Panc1 (cell line): ENCODE measurements at regions of chr3 and their contacts with region 1.

Region 1: GRCh38 chr3:170414202-170414663 is 4.4 kb upstream of the CLDN11 start:
- DNase-seq: peak; percentile 68
- ATAC-seq: peak; percentile 61
- H3K4me3 ChIP-seq: no peak overlapping the region
- H3K27ac ChIP-seq: no peak overlapping the region
- H3K4me1 ChIP-seq: no peaks in the 10 kb centered on the region
- H3K27me3 ChIP-seq: no peaks in the 10 kb centered on the region
- CTCF ChIP-seq: peak; percentile 99

Region 2: GRCh38 chr3:170307671-170308403 is 106.4 kb before region 1 on chr3:
- CTCF ChIA-PET with region 1: interaction called, 5 read pairs
- POLR2A ChIA-PET with region 1: no interaction called
- in situ Hi-C with region 1: no loop called
- intact Hi-C with region 1: loop called (anchors 2 kb)
- DNase-seq: no peak
- ATAC-seq: no peak
- H3K4me3 ChIP-seq: no peak overlapping the region
- H3K27ac ChIP-seq: no peak overlapping the region; the same call in 1 of the 2 replicates
- H3K4me1 ChIP-seq: no peaks in the 10 kb centered on the region
- H3K27me3 ChIP-seq: no peaks in the 10 kb centered on the region
- CTCF ChIP-seq: no peak

Region 3: GRCh38 chr3:170372190-170372879 is 41.9 kb before region 1 on chr3:
- CTCF ChIA-PET with region 1: interaction called, 15 read pairs
- POLR2A ChIA-PET with region 1: no interaction called
- in situ Hi-C with region 1: no loop called
- intact Hi-C with region 1: no loop called
- DNase-seq: no peak
- ATAC-seq: no peak
- H3K4me3 ChIP-seq: no peak overlapping the region
- H3K27ac ChIP-seq: no peak overlapping the region
- H3K4me1 ChIP-seq: no peaks in the 10 kb centered on the region
- H3K27me3 ChIP-seq: no peaks in the 10 kb centered on the region
- CTCF ChIP-seq: no peak

Region 4: GRCh38 chr3:170689893-170690660 is 275.8 kb after region 1 on chr3:
- CTCF ChIA-PET with region 1: interaction called, 13 read pairs
- POLR2A ChIA-PET with region 1: no interaction called
- in situ Hi-C with region 1: no loop called
- intact Hi-C with region 1: loop called (anchors 5 kb)
- DNase-seq: no peak
- ATAC-seq: peak; percentile 78; the same call in 1 of the 2 replicates
- H3K4me3 ChIP-seq: no peak overlapping the region
- H3K27ac ChIP-seq: peak overlapping the region; percentile 61; the same call in 1 of the 2 replicates
- H3K4me1 ChIP-seq: peaks cover 10% of the 10 kb centered on the region
- H3K27me3 ChIP-seq: no peaks in the 10 kb centered on the region
- CTCF ChIP-seq: peak; percentile 88

Region 5: GRCh38 chr3:170848292-170848917 is 434.2 kb after region 1 on chr3:
- CTCF ChIA-PET with region 1: interaction called, 17 read pairs
- POLR2A ChIA-PET with region 1: no interaction called
- in situ Hi-C with region 1: loop called (anchors 10 kb)
- intact Hi-C with region 1: loop called (anchors 1 kb)
- DNase-seq: no peak
- ATAC-seq: 0 out of 2 replicates have a peak, but pooled peaks have one; percentile 63
- H3K4me3 ChIP-seq: no peak overlapping the region
- H3K27ac ChIP-seq: no peak overlapping the region
- H3K4me1 ChIP-seq: no peaks in the 10 kb centered on the region
- H3K27me3 ChIP-seq: peaks cover 6% of the 10 kb centered on the region
- CTCF ChIP-seq: peak; percentile 69; the same call in 1 of the 2 replicates